Esophagus squamous epithelium (tissue), 5 donors: ENCODE measurements at regions of chr6 and their contacts with region 1.

Region 1: DNA sequence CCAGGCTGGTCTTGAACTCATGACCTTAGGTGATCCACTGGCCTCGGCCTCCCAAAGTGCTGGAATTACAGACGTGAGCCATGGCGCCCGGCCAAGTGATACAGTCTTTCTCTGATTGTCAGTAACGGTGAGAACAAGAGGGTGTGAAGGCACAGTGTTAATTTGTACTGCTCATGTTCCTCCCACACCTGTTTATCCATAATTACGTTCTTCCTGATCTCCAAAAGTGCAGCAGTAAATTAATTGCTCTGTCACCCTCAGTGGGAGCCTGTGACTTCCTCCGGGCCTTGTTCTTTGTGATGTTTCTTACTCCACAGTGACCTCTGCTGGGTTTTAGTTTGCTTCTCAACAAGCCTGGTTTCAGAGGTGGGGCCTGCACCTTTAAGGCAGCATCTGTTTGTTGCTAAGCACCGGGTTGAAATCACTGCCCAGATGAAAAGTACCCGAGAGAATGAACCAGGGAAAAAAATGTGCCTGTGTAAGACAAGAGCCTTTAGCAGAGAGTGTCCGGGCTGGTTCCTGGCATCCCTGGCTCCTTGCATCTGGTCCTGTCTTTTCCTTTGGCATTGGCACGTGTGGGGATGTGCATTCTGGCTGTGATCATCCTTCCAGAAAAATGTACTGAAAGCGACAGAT is 89.1 kb upstream of the CLDN20 start:
- DNase-seq: no peak
- H3K4me3 ChIP-seq: no peak overlapping the region
- H3K27ac ChIP-seq: peak overlapping the region in 1 of 4 donors; percentile 32
- H3K4me1 ChIP-seq: peaks cover 8 to 34% (median 16%) of the 10 kb centered on the region in 3 donors
- H3K27me3 ChIP-seq: no peaks in the 10 kb centered on the region
- CTCF ChIP-seq: peak; percentile 29 to 78 (median 60)
- POLR2A ChIP-seq: no peak

Region 2: GRCh38 chr6:154928325-154928922 is 246.3 kb before region 1 on chr6:
- intact Hi-C with region 1: loop called (anchors 5 kb)
- DNase-seq: no peak
- H3K4me3 ChIP-seq: no peak overlapping the region
- H3K27ac ChIP-seq: no peak overlapping the region
- H3K4me1 ChIP-seq: peaks cover 0 to 13% (median 0%) of the 10 kb centered on the region in 3 donors
- H3K27me3 ChIP-seq: no peaks in the 10 kb centered on the region
- CTCF ChIP-seq: peak; percentile 26 to 83 (median 71)
- POLR2A ChIP-seq: no peak

Region 3: DNA sequence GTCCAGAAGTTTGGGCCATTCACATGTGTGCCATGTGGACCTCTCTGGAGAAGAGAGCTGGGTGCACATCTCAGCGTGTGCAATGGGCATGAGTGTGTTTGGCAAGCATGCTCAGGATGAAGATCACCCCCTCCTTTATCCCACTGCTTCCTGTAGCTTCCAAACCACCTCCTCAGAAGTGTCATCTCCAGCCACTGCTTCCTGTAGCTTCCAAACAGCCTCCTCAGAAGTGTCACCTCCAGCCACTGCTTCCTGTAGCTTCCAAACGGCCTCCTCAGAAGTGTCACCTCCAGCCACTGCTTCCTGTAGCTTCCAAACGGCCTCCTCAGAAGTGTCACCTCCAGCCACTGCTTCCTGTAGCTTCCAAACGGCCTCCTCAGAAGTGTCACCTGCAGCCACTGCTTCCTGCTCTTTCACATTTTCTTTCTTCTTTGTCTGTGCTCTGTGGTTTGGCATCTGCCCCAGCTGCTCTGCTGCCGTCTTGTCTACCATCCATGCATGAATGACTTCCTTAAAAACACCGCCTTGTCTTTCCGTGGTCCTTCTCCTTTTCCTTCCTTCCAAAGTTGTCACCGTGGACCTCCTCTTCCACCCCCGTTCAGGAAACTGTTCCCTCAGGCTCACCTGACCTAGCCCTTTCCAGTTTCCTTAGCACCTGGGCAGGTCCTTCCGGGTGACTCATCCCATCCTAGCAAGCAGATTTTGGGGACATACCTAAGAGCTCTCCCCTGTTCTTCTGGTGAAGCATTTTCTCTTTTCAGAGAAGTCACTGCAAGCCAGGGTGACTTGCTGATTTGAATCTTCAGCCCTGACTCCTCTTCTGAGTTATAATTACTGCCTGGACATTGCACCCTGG is 223.1 kb before region 1 on chr6:
- intact Hi-C with region 1: no loop called
- DNase-seq: no peak
- H3K4me3 ChIP-seq: no peak overlapping the region
- H3K27ac ChIP-seq: no peak overlapping the region
- H3K4me1 ChIP-seq: peaks cover 0 to 11% (median 0%) of the 10 kb centered on the region in 3 donors
- H3K27me3 ChIP-seq: no peaks in the 10 kb centered on the region
- CTCF ChIP-seq: no peak
- POLR2A ChIP-seq: no peak

Region 4: GRCh38 chr6:155248008-155249001 is 73.6 kb after region 1 on chr6:
- intact Hi-C with region 1: loop called (anchors 5 kb)
- DNase-seq: no peak
- H3K4me3 ChIP-seq: peak overlapping the region in 1 of 4 donors; percentile 24
- H3K27ac ChIP-seq: peak overlapping the region in 2 of 4 donors; percentile 22 to 49
- H3K4me1 ChIP-seq: peaks cover 0 to 8% (median 0%) of the 10 kb centered on the region in 3 donors
- H3K27me3 ChIP-seq: no peaks in the 10 kb centered on the region
- CTCF ChIP-seq: peak in 5 of 6 experiments; percentile 55 to 72 (median 68)
- POLR2A ChIP-seq: no peak